Endothelial cell of umbilical vein (primary cell): ENCODE measurements at regions of chr7 and their contacts with region 1.

Region 1: DNA sequence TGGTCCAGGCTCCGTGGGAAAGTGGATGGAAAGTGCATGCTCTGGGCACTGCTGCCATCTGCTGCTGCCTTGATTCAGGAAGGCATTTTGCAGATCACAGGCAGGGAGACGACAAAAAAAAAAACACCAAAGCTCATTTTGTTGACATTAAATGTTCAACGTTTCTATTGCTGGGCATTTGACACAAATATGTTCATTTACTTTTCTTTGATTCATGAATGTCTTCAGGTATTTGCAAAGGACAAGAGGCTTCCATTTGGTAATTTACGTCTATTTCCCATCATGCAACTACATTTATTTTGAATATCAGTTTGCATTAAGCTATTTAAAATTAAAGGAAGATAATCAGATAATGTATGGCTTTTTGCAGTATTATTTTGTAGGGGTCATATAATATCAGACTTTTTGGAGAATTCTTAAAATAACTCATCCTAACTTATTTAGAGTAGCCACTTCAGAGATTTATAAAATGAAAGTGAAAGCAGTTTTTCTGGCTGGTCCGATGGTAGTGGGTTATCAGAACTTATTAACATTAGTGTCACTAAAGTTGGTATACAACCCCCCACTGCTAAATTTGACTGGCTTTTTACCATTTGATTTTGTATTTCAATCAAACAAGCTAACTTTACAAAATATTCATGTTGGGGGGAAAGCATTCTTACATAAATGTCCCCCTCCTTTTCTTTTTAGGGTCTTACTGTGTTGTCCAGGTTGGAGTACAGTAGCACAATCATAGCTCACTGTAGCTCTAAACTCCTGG is 65.3 kb downstream of the PDIA4 start:
- DNase-seq: peak; percentile 87
- H3K4me3 ChIP-seq: peak overlapping the region; percentile 56 to 92 (median 86)
- H3K27ac ChIP-seq: peak overlapping the region; percentile 50
- H3K4me1 ChIP-seq: peaks cover 12% of the 10 kb centered on the region
- H3K27me3 ChIP-seq: no peaks in the 10 kb centered on the region
- CTCF ChIP-seq: peak; percentile 65 to 75
- POLR2A ChIP-seq: no peak

Region 2: DNA sequence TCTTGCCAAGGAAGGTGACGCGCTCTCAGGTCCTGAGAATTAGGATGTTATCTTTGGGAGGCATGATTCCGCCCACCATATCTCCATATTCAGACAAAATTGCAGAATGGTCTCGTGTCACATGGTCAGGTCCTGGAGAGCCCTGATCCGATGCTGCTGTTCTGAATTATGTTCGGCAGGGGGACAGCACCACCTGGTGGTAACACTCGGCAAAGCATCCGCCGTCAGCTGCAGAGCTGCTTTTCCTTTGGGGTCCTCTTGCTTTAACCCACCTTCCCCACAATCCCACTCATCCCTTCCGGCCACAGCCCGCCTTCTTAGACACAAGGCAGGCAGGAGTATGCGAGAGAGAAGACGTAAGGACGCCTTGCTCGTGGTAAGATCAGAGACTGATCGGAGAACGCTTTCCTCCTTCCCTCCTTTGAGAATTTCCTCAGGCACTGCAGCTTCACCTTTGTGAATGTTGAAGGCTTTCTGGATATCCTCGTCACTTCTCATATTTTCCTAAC is 700.2 kb before region 1 on chr7:
- CTCF ChIA-PET with region 1: interaction called, 4 read pairs
- POLR2A ChIA-PET with region 1: no interaction called
- dilution Hi-C with region 1: no loop called
- intact Hi-C with region 1: loop called (anchors 2 kb)
- DNase-seq: peak; percentile 12
- H3K4me3 ChIP-seq: no peak overlapping the region
- H3K27ac ChIP-seq: no peak overlapping the region
- H3K4me1 ChIP-seq: no peaks in the 10 kb centered on the region
- H3K27me3 ChIP-seq: no peaks in the 10 kb centered on the region
- CTCF ChIP-seq: peak; percentile 68 to 89
- POLR2A ChIP-seq: no peak

Region 3: GRCh38 chr7:148527707-148528168 is 435.3 kb before region 1 on chr7:
- CTCF ChIA-PET with region 1: interaction called, 3 read pairs
- POLR2A ChIA-PET with region 1: no interaction called
- dilution Hi-C with region 1: no loop called
- intact Hi-C with region 1: loop called (anchors 1 kb)
- DNase-seq: peak; percentile 73
- H3K4me3 ChIP-seq: no peak overlapping the region
- H3K27ac ChIP-seq: no peak overlapping the region
- H3K4me1 ChIP-seq: no peaks in the 10 kb centered on the region
- H3K27me3 ChIP-seq: no peaks in the 10 kb centered on the region
- CTCF ChIP-seq: peak; percentile 75 to 89
- POLR2A ChIP-seq: no peak

Region 4: DNA sequence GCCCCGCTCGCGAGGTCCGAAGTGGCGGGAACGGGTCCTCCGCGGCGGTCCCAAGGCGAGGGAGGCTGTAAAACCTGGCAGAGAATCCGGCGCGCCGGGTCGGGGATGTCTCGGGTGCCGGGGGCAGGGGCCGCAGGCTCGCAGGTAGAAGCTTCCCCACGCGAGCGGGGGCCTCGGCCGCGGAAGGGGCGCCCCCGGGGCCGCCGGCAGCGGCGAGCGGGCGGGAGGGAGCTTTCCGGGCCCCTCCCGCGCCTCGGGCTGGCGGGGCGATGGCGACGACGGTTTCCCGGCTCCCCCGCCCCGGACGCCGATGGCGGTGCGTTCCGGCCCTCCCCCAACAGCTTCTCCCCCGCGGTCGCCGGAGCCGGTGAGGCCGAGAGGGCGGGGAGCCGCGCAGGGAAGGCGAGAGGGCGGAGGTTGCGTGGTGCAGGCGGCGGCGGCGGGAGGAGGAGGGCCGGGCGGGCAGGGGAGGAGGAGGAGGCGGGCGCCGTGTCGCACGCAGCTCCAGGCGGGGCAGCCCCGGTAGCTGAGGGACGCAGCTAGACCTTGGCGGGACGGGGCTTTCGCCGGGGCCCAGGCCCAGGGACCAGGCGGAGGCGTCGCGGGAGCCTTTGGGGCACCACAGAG is 264.5 kb before region 1 on chr7 and contains the start of gene CUL1:
- CTCF ChIA-PET with region 1: interaction called, 5 read pairs
- POLR2A ChIA-PET with region 1: no interaction called
- dilution Hi-C with region 1: no loop called
- intact Hi-C with region 1: loop called (anchors 2 kb)
- DNase-seq: peak; percentile 67
- H3K4me3 ChIP-seq: peak within 1 kb of the TSS; percentile 53 to 99 (median 72)
- H3K27ac ChIP-seq: peak within 1 kb of the TSS; percentile 87
- H3K4me1 ChIP-seq: peaks cover 33% of the 10 kb centered on the region
- H3K27me3 ChIP-seq: no peaks in the 10 kb centered on the region
- CTCF ChIP-seq: no peak
- POLR2A ChIP-seq: peak; percentile 63
- total RNA-seq, gene CUL1: 47.2 and 50.2 TPM in 2 replicates

Region 5: DNA sequence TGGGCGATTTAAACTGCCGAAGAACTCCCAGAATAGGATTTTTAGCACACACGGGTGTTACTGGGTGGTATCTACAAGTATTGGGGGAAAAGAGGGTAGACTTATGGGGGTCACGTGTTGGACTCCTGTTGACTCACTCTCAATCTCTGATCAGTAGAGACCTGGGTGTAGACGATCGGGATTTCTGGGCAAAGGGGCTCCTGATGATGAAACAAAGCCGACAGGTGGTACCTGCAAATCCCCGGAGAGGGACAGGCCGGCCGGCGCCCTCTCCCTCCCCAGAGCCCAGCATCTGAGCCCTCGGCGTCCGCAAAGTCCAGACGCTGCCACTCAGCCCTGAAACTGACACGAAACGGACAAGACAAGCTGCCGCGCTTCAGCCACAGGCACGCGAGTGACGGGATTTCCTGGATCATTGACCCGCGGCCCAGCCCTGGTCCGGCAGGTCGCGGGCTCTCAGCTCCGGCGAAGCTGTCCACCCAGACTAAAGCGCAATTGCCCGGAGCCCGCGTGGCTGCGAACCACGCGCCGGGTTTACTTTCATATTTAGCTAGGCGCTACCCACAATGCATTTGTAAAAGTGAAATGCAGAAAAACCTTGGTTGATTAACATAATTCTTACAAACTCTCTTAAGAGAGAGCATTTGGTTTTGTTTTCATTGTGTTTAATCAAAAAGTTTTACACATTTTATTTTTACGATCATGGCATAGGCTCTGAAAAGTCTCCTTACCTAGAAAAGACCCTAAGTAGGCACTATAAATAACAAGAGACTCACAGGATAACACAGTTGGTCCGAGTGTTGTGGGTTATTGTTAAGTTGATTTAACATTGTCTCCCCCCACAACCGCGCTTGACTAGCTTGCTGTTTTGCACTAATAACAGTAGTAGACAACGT is 22.1 kb before region 1 on chr7:
- CTCF ChIA-PET with region 1: interaction called, 13 read pairs
- POLR2A ChIA-PET with region 1: no interaction called
- dilution Hi-C with region 1: no loop called
- intact Hi-C with region 1: loop called (anchors 1 kb)
- DNase-seq: peak; percentile 90
- H3K4me3 ChIP-seq: peak overlapping the region; percentile 85 to 98 (median 88)
- H3K27ac ChIP-seq: peak overlapping the region; percentile 91
- H3K4me1 ChIP-seq: peaks cover 13% of the 10 kb centered on the region
- H3K27me3 ChIP-seq: no peaks in the 10 kb centered on the region
- CTCF ChIP-seq: no peak
- POLR2A ChIP-seq: peak; percentile 42

Region 6: DNA sequence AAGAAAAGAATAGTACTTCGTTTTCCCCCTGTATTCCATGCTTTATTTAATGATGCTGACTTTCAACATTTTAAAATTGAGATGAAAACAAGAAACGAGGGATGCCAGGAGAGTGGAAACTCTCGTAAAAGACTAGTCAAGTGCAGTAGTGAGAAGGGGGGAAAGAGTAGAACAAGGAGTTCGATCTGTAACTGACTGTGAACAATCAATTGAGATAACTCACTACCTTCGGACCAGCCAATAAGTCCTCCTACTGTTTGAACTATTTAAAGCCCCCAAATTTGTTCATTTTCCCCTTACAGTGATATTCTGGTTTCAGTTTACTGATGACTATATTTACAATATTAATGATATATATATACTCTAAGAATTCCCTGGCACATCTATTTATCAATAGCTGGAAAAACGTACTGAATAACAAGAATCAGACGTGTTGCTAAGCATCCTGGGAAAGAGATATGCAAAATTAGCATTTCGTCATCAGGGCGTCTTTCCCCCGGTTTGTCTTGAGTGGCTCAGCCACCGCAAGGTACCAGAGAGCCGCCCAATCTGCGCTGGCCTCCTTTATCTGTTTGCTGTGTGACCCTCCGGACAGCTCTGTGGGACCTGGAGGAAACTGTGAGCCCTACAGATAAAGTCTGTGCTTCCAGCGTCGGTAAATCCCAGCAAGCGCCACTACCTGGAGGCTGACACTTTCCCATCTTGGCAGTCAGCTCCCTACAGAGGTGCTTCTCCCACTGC is 24.2 kb after region 1 on chr7:
- CTCF ChIA-PET with region 1: interaction called, 5 read pairs
- POLR2A ChIA-PET with region 1: no interaction called
- dilution Hi-C with region 1: no loop called
- intact Hi-C with region 1: loop called (anchors 1 kb)
- DNase-seq: peak; percentile 94
- H3K4me3 ChIP-seq: peak overlapping the region; percentile 21 to 63 (median 56)
- H3K27ac ChIP-seq: peak overlapping the region; percentile 32
- H3K4me1 ChIP-seq: peaks cover 11% of the 10 kb centered on the region
- H3K27me3 ChIP-seq: peaks cover 0 to 10% of the 10 kb centered on the region in 2 experiments
- CTCF ChIP-seq: no peak
- POLR2A ChIP-seq: peak; percentile 63

Region 7: DNA sequence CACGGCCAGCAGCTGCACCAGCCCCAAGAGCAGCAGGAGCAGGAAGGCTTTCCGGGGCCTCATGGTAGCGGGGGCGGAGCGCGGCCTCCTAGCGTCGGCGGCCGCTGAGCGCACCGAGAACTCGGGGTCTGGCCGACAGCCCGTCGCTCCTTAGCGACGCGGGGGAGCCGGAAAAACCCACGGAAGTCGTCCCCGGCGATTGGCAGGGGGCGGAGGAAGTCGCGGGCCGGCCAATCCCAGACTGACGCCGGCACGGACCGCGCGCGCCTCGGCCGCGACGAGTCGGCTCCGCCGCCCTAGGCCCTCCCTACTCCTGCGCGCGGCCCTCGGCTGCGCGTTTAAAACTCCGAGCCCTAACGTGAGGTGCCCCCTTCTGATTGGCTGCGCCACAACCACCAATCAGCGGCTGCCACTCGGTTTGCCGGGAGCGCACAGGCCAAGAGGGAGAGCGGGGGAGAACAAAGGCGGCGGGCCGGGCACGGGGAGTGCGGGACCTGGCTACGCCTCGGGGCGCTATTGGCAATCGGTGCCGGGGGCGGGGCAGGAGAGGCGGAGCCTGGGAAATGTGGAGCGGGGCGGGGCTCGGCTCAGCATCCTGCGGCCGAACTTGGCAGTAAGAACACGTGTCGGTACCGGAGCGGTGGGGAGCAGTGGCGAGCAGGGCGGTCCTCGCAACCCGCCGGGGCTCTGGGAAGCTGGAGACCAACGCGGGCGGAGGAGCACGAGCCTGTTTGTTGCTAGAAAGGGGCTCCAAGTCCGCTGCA is 65.5 kb after region 1 on chr7 and contains the start of gene PDIA4:
- CTCF ChIA-PET with region 1: no interaction called
- POLR2A ChIA-PET with region 1: no interaction called
- dilution Hi-C with region 1: no loop called
- intact Hi-C with region 1: no loop called
- DNase-seq: peak; percentile 100
- H3K4me3 ChIP-seq: peak within 1 kb of the TSS; percentile 80 to 91 (median 90)
- H3K27ac ChIP-seq: peak within 1 kb of the TSS; percentile 56
- H3K4me1 ChIP-seq: peaks cover 12% of the 10 kb centered on the region
- H3K27me3 ChIP-seq: no peaks in the 10 kb centered on the region
- CTCF ChIP-seq: peak in 1 of 2 donors; percentile 50
- POLR2A ChIP-seq: peak; percentile 73
- total RNA-seq, gene PDIA4: 306 and 308 TPM in 2 replicates